ENCODE measurements at regions of chr1 and their contacts with region 1.

Region 1: DNA sequence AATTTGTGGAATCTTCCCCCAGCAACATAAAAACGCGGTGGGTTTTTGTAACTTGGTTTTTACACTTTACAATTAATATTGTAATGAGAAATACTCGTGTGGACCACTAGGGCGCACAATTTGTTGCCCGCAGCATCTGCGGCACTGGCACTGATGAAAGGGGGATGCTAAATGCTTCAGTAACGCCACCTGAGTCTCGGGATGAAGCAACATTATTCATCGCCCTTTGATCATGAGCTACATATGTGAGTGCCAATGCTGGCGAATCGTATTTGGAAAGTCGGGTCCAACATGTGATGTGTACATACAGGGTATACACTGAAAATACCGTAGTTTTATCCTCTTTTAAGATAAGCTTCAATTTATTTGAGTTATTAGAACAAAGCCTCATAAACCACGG is 34.2 kb upstream of the COX20 start:
- DNase-seq: peak in 1 of 2 experiments; percentile 10
- H3K4me3 ChIP-seq: no peak overlapping the region
- H3K27ac ChIP-seq: no peak overlapping the region
- H3K4me1 ChIP-seq: no peaks in the 10 kb centered on the region
- H3K27me3 ChIP-seq: no peaks in the 10 kb centered on the region
- CTCF ChIP-seq: peak; percentile 76

Region 2: GRCh38 chr1:244705261-244706234 is 95.7 kb before region 1 on chr1:
- CTCF ChIA-PET with region 1: no interaction called
- POLR2A ChIA-PET with region 1: no interaction called
- intact Hi-C with region 1: loop called (anchors 10 kb)
- DNase-seq: no peak
- H3K4me3 ChIP-seq: no peak overlapping the region
- H3K27ac ChIP-seq: no peak overlapping the region
- H3K4me1 ChIP-seq: no peaks in the 10 kb centered on the region
- H3K27me3 ChIP-seq: no peaks in the 10 kb centered on the region
- CTCF ChIP-seq: no peak

Region 3: GRCh38 chr1:244945109-244945671 is 143.9 kb after region 1 on chr1:
- CTCF ChIA-PET with region 1: no interaction called
- POLR2A ChIA-PET with region 1: no interaction called
- intact Hi-C with region 1: no loop called
- DNase-seq: no peak
- H3K4me3 ChIP-seq: no peak overlapping the region
- H3K27ac ChIP-seq: no peak overlapping the region
- H3K4me1 ChIP-seq: no peaks in the 10 kb centered on the region
- H3K27me3 ChIP-seq: no peaks in the 10 kb centered on the region
- CTCF ChIP-seq: no peak

Region 4: DNA sequence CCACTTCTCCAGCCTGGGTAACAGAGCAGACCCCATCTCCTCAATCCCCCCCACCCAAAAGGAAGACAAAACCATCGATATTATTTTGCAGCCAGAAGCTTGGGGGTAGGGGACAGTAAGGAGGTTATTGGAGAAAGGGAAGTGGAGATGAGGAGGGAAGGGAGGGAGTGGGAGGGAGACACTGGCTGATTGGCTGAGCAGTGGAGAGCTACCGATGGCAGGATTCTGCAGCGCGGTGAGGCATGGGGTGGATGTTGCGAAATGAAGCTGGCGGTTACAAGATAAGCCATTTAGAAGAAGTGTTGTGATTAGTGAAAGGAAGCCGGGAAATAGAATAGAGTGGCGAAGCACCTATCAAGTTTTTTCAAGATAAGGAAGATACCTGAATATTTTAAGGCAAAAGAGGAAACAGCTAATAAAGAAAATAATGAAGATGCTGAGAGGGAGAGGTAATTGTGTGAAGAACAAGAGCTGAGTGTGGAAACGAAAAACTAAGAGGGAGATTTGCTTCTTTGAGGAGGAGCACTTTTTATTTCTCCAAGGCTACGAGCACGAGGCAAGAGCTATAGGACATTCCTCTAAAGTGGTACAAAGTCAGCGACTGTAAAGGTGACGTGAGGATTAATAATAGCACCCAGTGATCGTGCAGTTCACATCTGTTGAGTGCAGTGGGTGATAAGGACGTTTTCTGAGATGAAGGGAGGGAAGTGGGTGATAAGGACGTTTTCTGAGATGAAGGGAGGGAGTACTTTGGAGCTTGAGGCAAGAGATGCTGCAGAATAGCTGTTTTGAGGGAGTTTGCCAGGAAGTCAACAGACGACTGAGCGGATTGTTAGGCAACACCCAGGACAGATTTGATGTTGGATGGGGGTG is 250.3 kb after region 1 on chr1:
- CTCF ChIA-PET with region 1: interaction called, 10 read pairs
- POLR2A ChIA-PET with region 1: no interaction called
- intact Hi-C with region 1: no loop called
- DNase-seq: no peak
- H3K4me3 ChIP-seq: no peak overlapping the region
- H3K27ac ChIP-seq: no peak overlapping the region
- H3K4me1 ChIP-seq: no peaks in the 10 kb centered on the region
- H3K27me3 ChIP-seq: peaks cover 59% of the 10 kb centered on the region
- CTCF ChIP-seq: no peak